Activated CD8-positive, alpha-beta T cell treated with anti-CD3 and anti-CD28 coated beads, Interleukin-2, amount 10 ng/mL, durations not matched to agents 7 days and 5 days (primary cell): ENCODE measurements at regions of chr1 and their contacts with region 1.

Region 1: DNA sequence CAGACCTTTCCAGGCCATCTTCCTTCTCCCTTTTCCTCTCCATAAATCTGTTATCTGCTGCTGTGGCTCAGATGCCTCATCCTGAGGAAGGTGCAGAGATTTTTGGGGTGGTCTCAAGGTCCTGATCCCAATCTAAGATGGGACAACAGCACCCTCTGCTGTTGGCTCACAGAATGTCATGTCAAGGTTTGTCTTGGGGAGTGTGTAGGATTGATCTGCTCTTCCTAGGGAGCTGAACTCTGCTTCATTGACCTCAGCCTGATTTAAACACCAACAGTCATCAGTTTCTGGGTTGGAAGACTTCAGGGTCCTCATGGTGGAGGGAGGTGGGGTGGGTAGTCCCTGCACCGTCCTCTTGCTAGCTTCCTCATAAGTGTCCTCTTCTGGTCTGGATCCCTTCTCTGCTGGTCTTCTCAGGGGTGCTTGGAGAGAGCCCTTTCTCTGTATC is 62.8 kb upstream of the LAX1 start:
- DNase-seq: peak; percentile 73
- ATAC-seq: peak; percentile 70
- H3K4me3 Mint-ChIP-seq: no peak overlapping the region
- H3K27ac Mint-ChIP-seq: peak overlapping the region; percentile 63
- H3K4me1 Mint-ChIP-seq: peaks cover 30% of the 10 kb centered on the region
- H3K27me3 Mint-ChIP-seq: no peaks in the 10 kb centered on the region

Region 2: GRCh38 chr1:203504397-203505250 is 197.5 kb before region 1 on chr1:
- CTCF ChIA-PET with region 1: interaction called, 124 read pairs
- POLR2A ChIA-PET with region 1: interaction called, 3 read pairs
- DNase-seq: peak; percentile 85
- ATAC-seq: peak; percentile 83
- H3K4me3 Mint-ChIP-seq: no peak overlapping the region
- H3K27ac Mint-ChIP-seq: no peak overlapping the region
- H3K4me1 Mint-ChIP-seq: peaks cover 6% of the 10 kb centered on the region
- H3K27me3 Mint-ChIP-seq: peaks cover 5% of the 10 kb centered on the region

Region 3: DNA sequence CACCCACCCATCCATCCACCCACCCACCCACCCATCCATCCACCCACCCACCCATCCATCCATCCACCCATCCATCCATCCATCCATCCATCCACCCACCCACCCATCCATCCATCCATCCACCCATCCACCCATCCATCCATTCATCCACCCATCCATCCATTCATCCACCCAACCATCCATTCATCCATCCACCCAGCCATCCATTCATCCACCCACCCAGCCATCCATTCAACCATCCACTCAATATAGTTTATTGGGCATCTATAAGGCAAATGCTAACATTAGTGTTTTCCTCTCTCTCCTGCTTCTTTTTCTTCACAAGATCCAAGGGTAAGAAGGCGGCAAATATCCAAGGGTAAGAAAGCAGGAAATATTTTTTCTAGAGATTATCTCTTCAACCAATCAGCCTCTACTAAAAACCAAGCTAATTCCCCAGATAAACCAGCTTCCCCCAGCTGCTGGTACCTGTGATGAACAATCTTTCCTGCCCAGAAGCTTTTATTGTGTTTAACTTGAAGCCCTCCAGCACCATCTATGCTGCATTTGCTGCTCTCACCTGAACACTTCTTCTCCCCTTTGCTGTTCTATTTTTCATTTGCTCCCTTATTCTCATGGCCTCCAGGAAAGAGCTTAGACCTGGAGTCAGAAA is 98.1 kb before region 1 on chr1:
- CTCF ChIA-PET with region 1: interaction called, 11 read pairs
- POLR2A ChIA-PET with region 1: no interaction called
- DNase-seq: no peak
- ATAC-seq: no peak
- H3K4me3 Mint-ChIP-seq: no peak overlapping the region
- H3K27ac Mint-ChIP-seq: no peak overlapping the region
- H3K4me1 Mint-ChIP-seq: peaks cover 52% of the 10 kb centered on the region
- H3K27me3 Mint-ChIP-seq: no peaks in the 10 kb centered on the region

Region 4: GRCh38 chr1:203649999-203650855 is 51.9 kb before region 1 on chr1:
- CTCF ChIA-PET with region 1: interaction called, 20 read pairs
- POLR2A ChIA-PET with region 1: no interaction called
- DNase-seq: peak; percentile 70
- ATAC-seq: peak; percentile 76
- H3K4me3 Mint-ChIP-seq: peak overlapping the region; percentile 63
- H3K27ac Mint-ChIP-seq: peak overlapping the region; percentile 76
- H3K4me1 Mint-ChIP-seq: peaks cover 77% of the 10 kb centered on the region
- H3K27me3 Mint-ChIP-seq: no peaks in the 10 kb centered on the region

Region 5: DNA sequence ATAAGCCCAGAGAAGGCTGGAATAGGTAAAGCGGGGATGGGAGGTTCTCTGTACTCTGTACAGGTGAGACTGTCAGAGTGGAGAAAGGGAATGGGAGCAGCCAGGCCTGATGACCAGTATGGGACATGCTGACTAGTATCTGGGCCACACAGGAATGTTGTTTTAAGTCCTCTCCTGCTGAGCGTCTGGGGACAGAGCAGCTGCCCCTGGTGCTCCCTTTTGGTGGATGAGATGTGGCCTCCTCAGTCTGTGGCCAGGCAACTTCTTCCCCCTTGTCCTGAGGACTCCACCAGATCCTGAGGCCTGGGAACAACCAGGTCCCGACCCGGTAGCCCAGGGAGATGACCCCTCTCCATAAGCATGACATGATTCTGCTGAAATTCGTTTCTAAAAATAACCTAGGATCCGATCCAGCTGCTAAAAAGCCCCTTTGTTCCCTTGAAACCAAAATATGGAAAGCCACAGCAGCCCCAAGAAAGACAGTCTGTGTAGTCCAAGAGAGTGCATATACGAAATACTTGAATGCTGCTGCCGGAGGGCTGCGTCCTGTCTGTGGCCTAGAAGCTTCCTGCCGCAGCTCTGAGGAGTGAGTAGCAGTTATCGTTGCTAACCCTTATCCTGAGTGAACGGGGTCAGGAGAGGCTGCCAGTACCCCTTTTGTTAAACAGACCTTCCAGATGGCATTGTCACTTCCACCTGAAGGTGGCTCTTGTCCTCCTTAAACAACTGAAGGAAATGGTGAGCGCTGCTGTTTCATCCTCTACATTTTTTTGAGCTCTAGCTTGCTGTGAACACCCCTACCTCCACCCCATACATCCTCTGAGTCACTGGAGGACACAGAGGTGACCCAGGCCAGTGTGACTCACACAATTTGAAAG is 28.4 kb before region 1 on chr1:
- CTCF ChIA-PET with region 1: interaction called, 57 read pairs
- POLR2A ChIA-PET with region 1: interaction called, 3 read pairs
- DNase-seq: peak; percentile 89
- ATAC-seq: peak; percentile 92
- H3K4me3 Mint-ChIP-seq: peak overlapping the region; percentile 63
- H3K27ac Mint-ChIP-seq: peak overlapping the region; percentile 93
- H3K4me1 Mint-ChIP-seq: peaks cover 60% of the 10 kb centered on the region
- H3K27me3 Mint-ChIP-seq: no peaks in the 10 kb centered on the region

Region 6: GRCh38 chr1:203754455-203754864 is 52.3 kb after region 1 on chr1:
- CTCF ChIA-PET with region 1: no interaction called
- POLR2A ChIA-PET with region 1: no interaction called
- DNase-seq: peak; percentile 31
- ATAC-seq: peak; percentile 52
- H3K4me3 Mint-ChIP-seq: peak overlapping the region; percentile 2
- H3K27ac Mint-ChIP-seq: peak overlapping the region; percentile 79
- H3K4me1 Mint-ChIP-seq: peaks cover 30% of the 10 kb centered on the region
- H3K27me3 Mint-ChIP-seq: no peaks in the 10 kb centered on the region

Region 7: GRCh38 chr1:203985044-203985443 is 282.9 kb after region 1 on chr1:
- CTCF ChIA-PET with region 1: no interaction called
- POLR2A ChIA-PET with region 1: no interaction called
- DNase-seq: no peak
- ATAC-seq: no peak
- H3K4me3 Mint-ChIP-seq: no peak overlapping the region
- H3K27ac Mint-ChIP-seq: no peak overlapping the region
- H3K4me1 Mint-ChIP-seq: peaks cover under 1% of the 10 kb centered on the region
- H3K27me3 Mint-ChIP-seq: peaks cover 14% of the 10 kb centered on the region